ENCODE measurements at regions of chr4 and their contacts with region 1.

Region 1: DNA sequence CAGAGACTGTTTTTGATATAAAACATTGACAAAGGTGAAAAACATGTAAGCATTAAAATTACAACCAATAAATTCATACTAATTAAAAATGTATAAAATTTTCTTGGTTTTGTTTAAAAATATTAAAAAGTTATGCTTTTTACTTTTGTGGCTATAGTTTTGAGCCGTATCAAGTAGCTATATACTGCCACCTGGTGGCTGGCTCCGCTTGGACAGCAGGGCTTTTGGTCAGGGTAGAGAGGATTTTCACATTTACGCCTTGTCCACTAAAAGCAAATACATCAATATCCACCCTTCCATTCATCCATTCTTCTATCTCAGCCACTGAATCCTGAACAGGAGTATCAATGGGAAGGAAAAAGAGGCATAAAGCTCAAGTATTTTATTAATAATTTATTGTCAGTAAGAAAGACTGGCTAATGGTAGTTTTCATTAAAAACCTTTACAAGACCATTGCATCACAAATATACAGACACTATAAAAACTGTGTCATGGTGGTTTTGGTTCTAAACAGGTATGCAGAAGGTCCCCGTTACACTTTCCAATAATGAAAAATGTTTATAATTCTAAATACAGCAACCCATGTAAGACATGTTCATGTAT is 32.1 kb upstream of the MTNR1A start:
- DNase-seq: peak in 4 of 5 donors; percentile 31 to 47 (median 38)
- H3K4me3 ChIP-seq: no peak overlapping the region
- H3K4me3 Mint-ChIP-seq: no peak overlapping the region
- H3K27ac ChIP-seq: no peak overlapping the region
- H3K27ac Mint-ChIP-seq: no peak overlapping the region
- H3K4me1 ChIP-seq: no peaks in the 10 kb centered on the region
- H3K4me1 Mint-ChIP-seq: no peaks in the 10 kb centered on the region
- H3K27me3 ChIP-seq: no peaks in the 10 kb centered on the region
- H3K27me3 Mint-ChIP-seq: no peaks in the 10 kb centered on the region

Region 2: GRCh38 chr4:186297013-186297645 is 290.4 kb before region 1 on chr4:
- CTCF ChIA-PET with region 1: interaction called, 34 read pairs
- POLR2A ChIA-PET with region 1: no interaction called
- intact Hi-C with region 1: no loop called
- DNase-seq: peak in 3 of 5 donors; percentile 2 to 11 (median 6)
- H3K4me3 ChIP-seq: no peak overlapping the region
- H3K4me3 Mint-ChIP-seq: no peak overlapping the region
- H3K27ac ChIP-seq: no peak overlapping the region
- H3K27ac Mint-ChIP-seq: no peak overlapping the region
- H3K4me1 ChIP-seq: no peaks in the 10 kb centered on the region
- H3K4me1 Mint-ChIP-seq: peaks cover 0 to 9% (median 4%) of the 10 kb centered on the region in 4 donors
- H3K27me3 ChIP-seq: no peaks in the 10 kb centered on the region
- H3K27me3 Mint-ChIP-seq: peaks cover 17 to 36% of the 10 kb centered on the region in 2 donors

Region 3: GRCh38 chr4:186514271-186514950 is 73.1 kb before region 1 on chr4:
- CTCF ChIA-PET with region 1: no interaction called
- POLR2A ChIA-PET with region 1: no interaction called
- intact Hi-C with region 1: no loop called
- DNase-seq: no peak
- H3K4me3 ChIP-seq: no peak overlapping the region
- H3K4me3 Mint-ChIP-seq: no peak overlapping the region
- H3K27ac ChIP-seq: no peak overlapping the region
- H3K27ac Mint-ChIP-seq: no peak overlapping the region
- H3K4me1 ChIP-seq: no peaks in the 10 kb centered on the region
- H3K4me1 Mint-ChIP-seq: no peaks in the 10 kb centered on the region
- H3K27me3 ChIP-seq: no peaks in the 10 kb centered on the region
- H3K27me3 Mint-ChIP-seq: no peaks in the 10 kb centered on the region

Region 4: DNA sequence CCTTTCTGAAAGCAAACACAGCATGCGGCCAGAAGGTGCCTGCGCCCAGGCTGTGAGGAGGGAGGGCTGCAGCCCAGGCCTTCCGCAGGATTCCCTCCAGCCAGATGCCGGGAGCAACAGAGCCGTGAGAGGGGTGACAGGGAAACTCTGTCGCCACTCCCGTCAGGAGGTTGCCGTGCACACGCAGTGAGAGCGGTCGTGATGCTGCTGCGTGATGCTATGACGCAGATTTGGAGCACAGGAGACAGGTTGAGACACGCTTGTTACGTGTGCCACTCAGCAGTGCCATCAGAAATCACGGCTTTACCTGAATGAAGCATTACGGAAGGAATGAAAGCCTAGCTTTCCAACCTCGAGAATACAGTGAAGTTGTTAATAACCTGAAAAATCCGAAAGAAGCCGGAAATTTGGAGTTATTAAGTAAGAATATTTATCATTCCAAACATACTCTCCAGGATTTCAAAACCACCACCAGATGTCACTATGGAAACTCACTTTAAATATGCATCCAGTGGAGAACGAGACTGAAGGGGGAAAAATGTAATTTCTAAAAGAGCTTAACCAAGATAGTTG is 81.7 kb after region 1 on chr4:
- CTCF ChIA-PET with region 1: no interaction called
- POLR2A ChIA-PET with region 1: no interaction called
- intact Hi-C with region 1: no loop called
- DNase-seq: no peak
- H3K4me3 ChIP-seq: no peak overlapping the region
- H3K4me3 Mint-ChIP-seq: no peak overlapping the region
- H3K27ac ChIP-seq: no peak overlapping the region
- H3K27ac Mint-ChIP-seq: no peak overlapping the region
- H3K4me1 ChIP-seq: no peaks in the 10 kb centered on the region
- H3K4me1 Mint-ChIP-seq: no peaks in the 10 kb centered on the region
- H3K27me3 ChIP-seq: no peaks in the 10 kb centered on the region
- H3K27me3 Mint-ChIP-seq: peaks cover 0 to 1% of the 10 kb centered on the region in 2 donors

Region 5: GRCh38 chr4:186932631-186933187 is 345.2 kb after region 1 on chr4:
- CTCF ChIA-PET with region 1: no interaction called
- POLR2A ChIA-PET with region 1: no interaction called
- intact Hi-C with region 1: no loop called
- DNase-seq: no peak
- H3K4me3 ChIP-seq: no peak overlapping the region
- H3K4me3 Mint-ChIP-seq: no peak overlapping the region
- H3K27ac ChIP-seq: no peak overlapping the region
- H3K27ac Mint-ChIP-seq: no peak overlapping the region
- H3K4me1 ChIP-seq: no peaks in the 10 kb centered on the region
- H3K4me1 Mint-ChIP-seq: no peaks in the 10 kb centered on the region
- H3K27me3 ChIP-seq: no peaks in the 10 kb centered on the region
- H3K27me3 Mint-ChIP-seq: no peaks in the 10 kb centered on the region